ENCODE measurements at regions of chr10 and their contacts with region 1.

Region 1: GRCh38 chr10:97425964-97426775 is at the start of gene PGAM1:
- DNase-seq: peak; percentile 85 to 97
- H3K4me3 ChIP-seq: peak within 1 kb of the TSS; percentile 75 to 97
- H3K27ac ChIP-seq: peak within 1 kb of the TSS; percentile 86 to 89
- H3K4me1 ChIP-seq: peaks cover 9 to 17% of the 10 kb centered on the region in 2 donors
- H3K27me3 ChIP-seq: no peaks in the 10 kb centered on the region
- CTCF ChIP-seq: peak; percentile 60 to 72 (median 69)
- total RNA-seq, gene PGAM1: 171 TPM

Region 2: DNA sequence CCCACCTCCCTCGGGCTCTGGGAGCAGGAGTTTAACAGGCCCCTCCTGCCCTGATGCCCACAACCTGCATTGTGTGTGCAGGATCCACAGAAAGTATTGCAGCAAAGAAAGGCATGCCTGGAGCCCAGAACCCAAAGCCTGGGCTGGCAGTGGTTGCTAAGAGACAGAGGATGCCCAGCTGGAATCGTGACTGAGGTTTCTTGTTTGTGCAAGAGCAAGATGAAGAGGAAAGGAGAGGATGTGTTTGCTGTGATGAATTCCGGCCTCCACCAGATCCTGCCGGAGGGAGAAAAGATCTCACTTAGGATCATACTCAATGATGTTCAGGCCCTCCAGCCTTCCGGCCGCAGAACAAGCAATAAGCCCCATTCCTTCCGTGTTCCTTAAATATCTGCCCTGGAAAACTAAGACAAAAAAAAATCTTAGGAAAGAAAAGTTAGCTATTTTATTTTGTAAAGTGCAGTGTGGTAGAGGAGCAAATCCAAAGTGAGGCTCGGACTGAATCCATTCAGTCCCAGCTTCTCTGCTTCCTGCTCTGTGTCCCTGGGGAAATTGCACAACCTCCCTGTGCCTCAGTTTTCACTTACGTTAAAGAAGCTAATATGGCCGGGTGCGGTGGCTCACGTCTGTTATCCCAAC is 297.5 kb before region 1 on chr10:
- intact Hi-C with region 1: no loop called
- DNase-seq: no peak
- H3K4me3 ChIP-seq: no peak overlapping the region
- H3K27ac ChIP-seq: no peak overlapping the region
- H3K4me1 ChIP-seq: no peaks in the 10 kb centered on the region
- H3K27me3 ChIP-seq: no peaks in the 10 kb centered on the region
- CTCF ChIP-seq: no peak

Region 3: GRCh38 chr10:97400665-97401454 is 25.3 kb before region 1 on chr10 and contains the start of gene RRP12:
- intact Hi-C with region 1: loop called (anchors 2 kb)
- DNase-seq: peak; percentile 72 to 96
- H3K4me3 ChIP-seq: peak within 1 kb of the TSS; percentile 74 to 85
- H3K27ac ChIP-seq: peak within 1 kb of the TSS; percentile 79
- H3K4me1 ChIP-seq: peaks cover 7 to 9% of the 10 kb centered on the region in 2 donors
- H3K27me3 ChIP-seq: no peaks in the 10 kb centered on the region
- CTCF ChIP-seq: peak in 1 of 3 experiments; percentile 9
- total RNA-seq, gene RRP12: 5.9 TPM

Region 4: DNA sequence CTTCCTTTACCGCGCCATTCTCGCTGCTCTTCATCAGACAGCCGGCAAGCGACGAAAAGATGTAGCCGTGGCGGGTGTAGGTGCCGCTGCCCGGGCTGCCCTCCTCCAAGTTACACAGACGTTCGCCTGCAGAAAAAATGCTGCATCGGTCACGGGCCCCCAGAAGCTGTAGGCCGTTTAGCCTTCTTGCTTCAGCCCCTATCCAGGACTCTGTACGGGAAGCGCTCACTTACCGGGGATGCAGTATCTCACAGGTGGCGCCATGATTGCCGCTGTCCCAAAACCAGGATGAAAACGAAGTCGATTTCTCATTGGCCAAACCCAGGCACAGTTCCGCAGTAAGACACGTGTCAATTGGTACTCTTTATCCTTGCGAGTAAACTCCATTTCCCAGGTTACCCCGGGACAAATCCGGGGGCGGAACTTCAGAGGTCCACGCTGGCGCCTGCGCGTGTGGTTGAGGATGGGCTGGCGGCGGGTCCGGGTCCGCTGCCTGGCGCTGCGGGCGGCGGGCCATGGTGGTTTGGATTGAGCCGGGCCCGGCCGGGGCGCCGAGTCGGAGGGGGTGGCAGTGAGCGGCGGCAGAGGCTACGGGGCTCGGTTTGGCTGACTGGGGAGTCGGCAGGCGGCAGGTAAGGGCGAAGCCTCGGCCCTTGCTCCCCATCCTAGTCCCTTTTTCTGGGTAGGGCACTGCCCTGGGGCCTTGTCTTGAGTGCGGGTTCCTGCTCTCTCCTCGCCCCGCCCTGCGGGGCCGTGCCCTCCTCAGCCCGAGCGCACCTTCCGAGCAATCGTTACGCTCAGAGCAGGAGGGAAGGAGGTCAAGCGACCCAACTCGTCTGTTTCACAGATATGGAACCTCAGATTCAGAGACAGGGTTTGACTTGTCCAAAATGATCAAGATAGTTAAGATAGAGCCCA is 19.8 kb after region 1 on chr10 and contains the starts of genes EXOSC1 and ZDHHC16:
- intact Hi-C with region 1: loop called (anchors 2 kb)
- DNase-seq: peak; percentile 87 to 96
- H3K4me3 ChIP-seq: peak within 1 kb of the TSS; percentile 87 to 98
- H3K27ac ChIP-seq: peak within 1 kb of the TSS; percentile 41 to 66
- H3K4me1 ChIP-seq: peaks cover 7 to 30% of the 10 kb centered on the region in 2 donors
- H3K27me3 ChIP-seq: no peaks in the 10 kb centered on the region
- CTCF ChIP-seq: peak in 1 of 3 experiments; percentile 23
- total RNA-seq, gene EXOSC1: 11.3 TPM
- total RNA-seq, gene ZDHHC16: 30.4 TPM

Region 5: GRCh38 chr10:97574374-97575119 is 148.4 kb after region 1 on chr10:
- intact Hi-C with region 1: no loop called
- DNase-seq: peak; percentile 57 to 91
- H3K4me3 ChIP-seq: no peak overlapping the region
- H3K27ac ChIP-seq: peak overlapping the region; percentile 63 to 76
- H3K4me1 ChIP-seq: peaks cover 10 to 14% of the 10 kb centered on the region in 2 donors
- H3K27me3 ChIP-seq: no peaks in the 10 kb centered on the region
- CTCF ChIP-seq: no peak

Region 6: GRCh38 chr10:97632949-97633884 is 207.0 kb after region 1 on chr10 and contains the start of gene MORN4:
- intact Hi-C with region 1: loop called (anchors 5 kb)
- DNase-seq: peak; percentile 69 to 96
- H3K4me3 ChIP-seq: peak within 1 kb of the TSS; percentile 73 to 74
- H3K27ac ChIP-seq: peak within 1 kb of the TSS in 1 of 2 donors; percentile 6
- H3K4me1 ChIP-seq: peaks cover 0 to 3% of the 10 kb centered on the region in 2 donors
- H3K27me3 ChIP-seq: no peaks in the 10 kb centered on the region
- CTCF ChIP-seq: no peak
- total RNA-seq, gene MORN4: 2.3 TPM

Region 7: DNA sequence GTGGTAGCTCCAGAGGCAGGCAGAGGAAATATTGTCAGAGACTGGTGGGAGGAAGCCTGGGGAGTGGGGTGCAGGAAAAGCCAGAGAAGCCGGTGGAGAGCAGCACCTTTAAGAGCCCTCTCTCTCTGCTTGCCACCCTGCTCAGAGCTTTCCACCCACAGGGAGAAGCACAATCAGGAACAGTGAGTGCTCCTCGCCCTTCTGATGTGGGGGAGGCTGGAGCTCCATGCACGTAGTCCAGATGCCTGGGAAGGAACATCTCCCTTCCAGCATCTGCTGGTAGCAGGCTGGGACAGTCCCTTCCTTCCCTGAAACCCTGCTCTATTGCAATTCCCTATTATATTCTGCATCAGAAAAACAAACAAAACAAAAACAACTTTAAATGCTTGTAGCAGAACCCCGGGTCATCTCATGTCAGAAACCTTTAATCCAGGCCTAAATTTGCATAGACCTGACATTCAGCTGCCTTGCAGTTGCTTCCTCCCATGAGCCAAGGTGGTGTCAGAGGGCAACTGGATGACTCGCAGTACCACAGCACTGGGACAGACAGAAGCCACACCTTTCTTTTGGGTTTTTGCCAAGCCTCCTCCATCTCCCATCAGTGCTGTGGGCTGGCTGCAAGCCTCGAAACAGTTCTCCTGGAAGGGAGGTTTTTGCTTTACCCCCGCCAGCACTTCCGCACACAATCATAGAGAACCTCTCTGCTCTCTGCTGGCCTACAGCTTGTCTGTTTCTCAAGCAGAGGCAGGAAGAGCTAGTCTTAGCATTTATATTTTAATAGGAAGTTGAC is 247.8 kb after region 1 on chr10:
- intact Hi-C with region 1: no loop called
- DNase-seq: no peak
- H3K4me3 ChIP-seq: no peak overlapping the region
- H3K27ac ChIP-seq: no peak overlapping the region
- H3K4me1 ChIP-seq: no peaks in the 10 kb centered on the region
- H3K27me3 ChIP-seq: no peaks in the 10 kb centered on the region
- CTCF ChIP-seq: no peak

Region 8: GRCh38 chr10:97736902-97737769 is 311.0 kb after region 1 on chr10 and contains the start of gene ZFYVE27:
- intact Hi-C with region 1: loop called (anchors 10 kb)
- DNase-seq: peak; percentile 79 to 97
- H3K4me3 ChIP-seq: peak within 1 kb of the TSS; percentile 100
- H3K27ac ChIP-seq: peak within 1 kb of the TSS; percentile 97
- H3K4me1 ChIP-seq: peaks cover 2 to 20% of the 10 kb centered on the region in 2 donors
- H3K27me3 ChIP-seq: no peaks in the 10 kb centered on the region
- CTCF ChIP-seq: no peak
- total RNA-seq, gene ZFYVE27: 62.2 TPM